Activated naive CD4-positive, alpha-beta T cell treated with anti-CD3 and anti-CD28 coated beads for 36 hours (primary cell): ENCODE measurements at regions of chr3 and their contacts with region 1.

Region 1: DNA sequence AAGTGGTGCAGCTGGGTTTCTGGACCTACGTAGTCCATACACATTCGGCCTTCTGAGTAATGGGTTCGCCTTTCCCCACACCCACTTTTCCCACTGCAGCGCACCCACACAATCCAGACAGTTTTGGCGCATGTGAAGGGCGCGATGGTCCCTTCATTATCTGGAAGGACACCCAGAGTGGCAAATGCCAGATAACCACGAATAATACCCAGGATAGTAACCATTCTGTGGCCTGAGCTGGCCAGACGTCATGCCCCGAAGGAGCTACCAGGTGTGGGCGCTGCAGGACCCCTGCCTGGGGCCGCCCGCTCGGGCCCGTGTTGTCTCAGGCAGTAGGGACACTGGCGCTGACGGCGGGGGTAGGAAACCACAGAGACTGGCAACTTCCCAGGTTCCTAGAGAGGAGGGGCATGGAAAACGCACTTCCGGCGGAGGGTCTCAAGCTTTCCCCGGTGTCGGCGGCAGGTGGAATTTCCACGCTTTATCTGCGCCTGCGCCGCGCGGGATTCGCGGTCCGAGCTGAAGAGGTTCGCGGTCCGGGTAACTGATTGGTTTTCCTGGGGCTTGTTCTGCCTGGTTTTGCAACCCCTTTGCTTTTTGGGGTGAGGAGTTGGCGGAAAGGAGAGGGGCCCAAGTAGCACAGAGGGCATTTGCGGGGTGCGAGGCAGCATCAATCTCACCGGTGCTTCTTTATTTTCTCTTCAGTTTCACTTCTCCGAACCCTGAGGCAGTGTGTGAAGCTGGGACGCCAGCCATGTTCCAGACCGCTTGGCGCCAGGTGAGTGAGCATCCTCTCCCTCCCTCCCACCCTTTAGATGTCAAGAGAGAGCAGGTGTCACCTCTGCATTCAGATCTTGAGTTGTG is at the start of gene ZNF620:
- DNase-seq: peak; percentile 54
- H3K4me3 Mint-ChIP-seq: peak within 1 kb of the TSS; percentile 86
- H3K27ac Mint-ChIP-seq: peak within 1 kb of the TSS; percentile 56
- H3K4me1 Mint-ChIP-seq: peaks cover 16% of the 10 kb centered on the region
- H3K27me3 Mint-ChIP-seq: no peaks in the 10 kb centered on the region
- total RNA-seq, gene ZNF620: 2.3 TPM

Region 2: GRCh38 chr3:40476478-40477470 is 29.1 kb before region 1 on chr3 and contains the start of gene ZNF619:
- CTCF ChIA-PET with region 1: interaction called, 5 read pairs
- intact Hi-C with region 1: loop called (anchors 2 kb)
- DNase-seq: peak; percentile 55
- H3K4me3 Mint-ChIP-seq: peak within 1 kb of the TSS; percentile 84
- H3K27ac Mint-ChIP-seq: peak within 1 kb of the TSS; percentile 54
- H3K4me1 Mint-ChIP-seq: peaks cover 10% of the 10 kb centered on the region
- H3K27me3 Mint-ChIP-seq: no peaks in the 10 kb centered on the region
- total RNA-seq, gene ZNF619: 4.2 to 4.7 TPM